ENCODE measurements at regions of chr2 and their contacts with region 1.

Region 1: DNA sequence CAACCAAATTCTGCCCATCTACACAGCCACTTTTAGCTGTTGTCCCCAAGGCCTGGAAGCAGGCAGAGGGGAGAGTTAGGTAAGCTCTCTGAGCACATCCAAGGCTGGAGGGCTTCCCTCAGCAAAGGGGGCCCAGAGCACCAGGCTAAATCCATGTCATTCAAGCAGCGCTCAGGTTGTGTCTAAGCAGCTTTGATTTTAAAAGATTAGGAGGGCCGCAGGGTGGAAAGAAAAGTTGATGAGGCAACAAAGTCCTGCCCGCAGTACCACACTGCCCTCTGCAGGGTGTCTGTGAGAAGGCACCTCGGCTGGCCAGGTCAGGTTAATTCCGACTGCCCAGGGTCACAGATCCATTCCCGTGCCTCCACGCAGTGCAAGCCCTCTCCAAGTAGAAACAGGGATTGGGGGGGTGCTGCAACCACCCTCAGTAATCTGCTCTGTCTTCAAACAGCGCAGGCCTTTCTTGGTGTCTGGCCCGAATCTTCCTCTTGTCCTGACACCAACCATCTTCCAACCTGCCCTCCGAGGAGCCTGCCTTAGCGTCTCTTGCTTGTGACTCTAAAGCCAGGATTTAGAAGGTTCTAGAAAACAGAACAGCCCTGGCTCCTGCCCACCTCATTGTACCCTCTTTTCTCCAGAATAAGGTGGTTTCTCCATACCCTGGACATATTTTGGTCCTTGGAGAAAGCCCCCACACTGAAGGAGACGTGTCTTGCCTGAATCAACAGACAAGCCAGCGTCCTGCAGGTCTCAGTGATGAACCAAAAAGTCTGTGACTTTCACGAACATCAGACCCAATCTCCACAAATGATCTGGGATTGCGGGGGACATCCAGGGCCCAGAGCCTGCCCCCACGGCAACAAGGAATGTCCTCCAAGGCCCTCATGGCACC is 289.2 kb downstream of the TNS1 start:
- DNase-seq: peak; percentile 75 to 97 (median 86)

Region 2: DNA sequence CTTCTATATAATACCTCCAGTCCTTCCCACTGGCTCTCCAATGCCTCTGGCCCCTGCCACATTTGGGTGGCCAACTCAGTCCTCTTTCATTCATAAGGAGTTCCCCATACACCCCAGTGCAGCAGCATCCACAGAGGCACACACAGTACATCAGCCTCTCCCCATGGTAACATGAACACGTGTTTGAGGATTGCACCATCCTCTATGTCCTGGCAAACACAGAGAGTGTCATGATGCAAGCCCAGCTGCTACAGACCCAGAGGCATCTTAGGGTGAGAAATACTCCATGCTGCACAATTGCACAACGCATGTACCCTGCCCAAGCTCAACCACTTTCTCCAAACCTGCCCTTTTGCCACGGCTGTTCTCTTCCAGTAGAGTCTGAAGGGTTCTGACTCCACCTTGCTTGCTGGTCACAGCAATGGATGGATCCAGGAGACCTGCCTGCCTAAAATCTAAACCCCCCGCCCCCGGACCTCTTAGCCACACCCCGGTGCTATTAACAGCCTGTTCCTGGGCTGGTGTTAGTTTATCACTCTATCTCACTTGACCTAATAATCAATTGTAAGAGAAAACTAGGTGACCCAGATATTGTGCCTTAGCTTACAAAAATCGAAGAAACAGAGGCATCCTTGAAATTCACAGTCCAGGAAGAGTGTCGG is 1029.7 kb before region 1 on chr2:
- intact Hi-C with region 1: loop called (anchors 5 kb)
- DNase-seq: peak in 2 of 10 donors; percentile 42 to 85

Region 3: DNA sequence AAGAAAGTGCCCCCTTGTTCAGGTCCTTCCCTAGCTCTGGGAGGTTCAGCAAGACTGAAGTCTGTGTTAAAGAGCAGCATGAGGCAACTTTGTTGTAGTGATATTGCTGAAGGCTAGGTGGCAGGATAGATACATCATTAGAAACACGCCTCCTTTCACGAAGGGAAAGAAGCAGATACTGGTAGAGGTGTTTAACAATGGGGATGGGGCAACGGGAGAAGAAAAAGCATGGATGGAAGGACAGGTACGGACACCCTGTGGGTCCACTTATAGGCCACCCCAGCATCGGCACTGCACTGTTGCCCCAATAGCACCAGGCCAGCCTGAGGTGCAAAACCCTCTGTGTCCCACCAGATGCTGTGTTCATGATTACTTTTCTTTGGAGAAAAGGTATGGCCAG is 1014.7 kb before region 1 on chr2:
- intact Hi-C with region 1: loop called (anchors 5 kb)
- DNase-seq: no peak

Region 4: GRCh38 chr2:217166241-217166850 is 547.3 kb before region 1 on chr2:
- intact Hi-C with region 1: loop called (anchors 5 kb)
- DNase-seq: no peak

Region 5: GRCh38 chr2:217510771-217511291 is 202.8 kb before region 1 on chr2:
- intact Hi-C with region 1: loop called (anchors 5 kb)
- DNase-seq: peak in 7 of 10 donors; percentile 29 to 87 (median 52)

Region 6: DNA sequence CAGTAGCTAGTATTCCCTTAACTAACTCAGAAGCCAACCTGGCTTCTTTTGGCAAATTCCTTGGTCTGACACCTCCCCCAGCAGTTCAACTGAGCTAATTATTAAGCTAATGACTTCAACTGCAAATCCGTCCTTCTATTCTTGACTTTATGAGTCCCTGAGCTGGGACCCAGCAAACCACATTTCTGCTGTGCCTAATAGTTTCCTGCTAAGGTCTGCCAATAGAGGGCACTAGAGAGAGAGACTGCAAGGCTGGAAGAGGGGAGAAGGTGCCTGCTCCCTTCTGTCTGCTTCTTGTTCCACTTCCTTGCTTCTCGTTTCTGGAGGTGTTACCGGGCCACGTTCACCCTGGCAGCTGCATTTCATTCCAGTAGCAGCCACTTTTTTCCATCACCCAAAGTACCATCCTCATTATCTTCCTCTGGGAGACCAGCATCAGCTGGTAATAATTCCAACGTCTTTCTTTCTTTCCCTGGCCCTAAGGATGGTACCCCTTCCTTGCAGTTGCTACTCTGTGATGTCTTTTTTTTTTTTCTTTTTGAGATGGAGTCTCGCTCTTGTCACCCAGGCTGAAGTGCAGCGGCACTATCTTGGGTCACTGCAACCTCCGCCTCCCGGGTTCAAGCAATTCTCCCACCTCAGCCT is 62.8 kb before region 1 on chr2:
- intact Hi-C with region 1: loop called (anchors 2 kb)
- DNase-seq: peak in 2 of 10 donors; percentile 7 to 33

Region 7: GRCh38 chr2:217756375-217757107 is 42.9 kb after region 1 on chr2:
- intact Hi-C with region 1: loop called (anchors 5 kb)
- DNase-seq: peak; percentile 69 to 97 (median 86)

Region 8: DNA sequence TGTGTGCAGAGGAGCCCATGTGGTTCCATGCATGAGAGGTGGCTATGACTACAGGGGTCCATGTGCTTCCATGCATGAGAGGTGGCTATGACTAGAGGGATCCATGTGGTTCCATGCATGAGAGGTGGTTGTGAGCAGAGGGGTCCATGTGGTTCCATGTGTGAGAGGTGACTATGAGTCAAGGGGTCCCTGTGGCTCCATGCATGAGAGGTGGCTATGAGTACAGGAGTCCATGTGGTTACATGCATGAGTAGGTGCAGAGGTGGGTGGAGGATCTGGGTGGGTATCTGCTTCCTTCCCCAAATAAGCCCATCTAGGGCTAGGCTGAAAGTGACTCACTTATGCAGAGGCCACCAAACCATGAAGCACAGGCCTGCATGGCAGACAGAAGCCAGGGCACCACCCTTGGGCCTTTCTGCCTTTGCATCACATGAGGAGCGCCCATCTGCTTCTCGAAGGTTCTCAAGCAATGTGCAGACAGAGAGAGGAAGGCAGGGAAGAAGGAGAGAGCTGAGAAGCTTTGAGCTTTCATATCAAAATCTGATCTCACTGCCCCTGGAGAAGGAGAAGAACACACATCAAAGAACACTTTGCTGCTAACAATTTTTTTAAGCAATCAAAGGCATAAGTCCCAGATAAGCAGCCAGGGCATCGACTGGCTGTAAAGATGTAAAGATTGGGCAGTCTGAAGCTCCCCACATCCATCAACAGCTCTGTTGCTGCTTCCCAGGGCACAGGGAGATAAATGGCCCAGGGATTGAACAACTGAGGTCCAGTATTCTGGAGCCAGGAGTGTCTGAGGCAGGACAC is 151.5 kb after region 1 on chr2:
- intact Hi-C with region 1: no loop called
- DNase-seq: no peak

Measured in posterior cingulate gyrus (tissue), 11 donors.